ENCODE measurements at regions of chr11 and their contacts with region 1.

Region 1: DNA sequence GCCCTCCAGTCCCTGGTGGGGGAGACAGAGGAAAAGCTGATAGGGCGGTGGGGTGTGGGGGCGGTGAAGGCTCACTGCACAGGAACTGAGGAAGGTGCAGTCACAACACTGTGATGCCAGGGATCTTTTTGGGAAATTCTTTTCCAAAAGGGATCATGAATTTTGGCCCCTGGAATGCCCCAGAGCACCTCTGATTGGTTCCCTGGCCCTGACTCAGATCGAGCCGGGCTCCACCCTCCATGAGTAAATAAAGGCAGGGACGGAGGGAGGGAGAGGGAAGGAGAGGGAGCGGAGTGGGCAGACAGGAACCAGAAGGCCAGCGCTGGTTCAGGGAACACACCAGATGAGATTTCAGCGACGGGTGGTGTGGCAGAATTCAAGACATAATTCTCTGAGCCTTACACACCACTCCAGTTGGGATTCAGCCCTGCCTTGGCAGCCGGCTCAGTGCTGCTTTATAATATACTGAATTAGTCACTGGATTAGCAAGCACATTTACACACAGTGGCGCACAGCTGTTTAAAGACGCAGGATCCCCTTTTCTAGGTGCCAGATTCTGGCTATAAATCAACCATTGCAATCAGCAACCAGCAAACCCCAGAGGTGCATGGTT is 80.3 kb downstream of the ETS1 start:
- DNase-seq: peak in 4 of 9 experiments; percentile 51 to 65 (median 60)
- ATAC-seq: peak; percentile 30
- H3K4me3 ChIP-seq: peak overlapping the region; percentile 37 to 94
- H3K4me3 Mint-ChIP-seq: peak overlapping the region; percentile 84
- H3K27ac ChIP-seq: peak overlapping the region; percentile 48 to 75
- H3K27ac Mint-ChIP-seq: peak overlapping the region; percentile 98
- H3K4me1 ChIP-seq: peaks cover 100% of the 10 kb centered on the region
- H3K4me1 Mint-ChIP-seq: peaks cover 97% of the 10 kb centered on the region
- H3K27me3 ChIP-seq: no peaks in the 10 kb centered on the region
- H3K27me3 Mint-ChIP-seq: no peaks in the 10 kb centered on the region
- CTCF ChIP-seq: no peak

Region 2: GRCh38 chr11:128302425-128303186 is 204.5 kb before region 1 on chr11:
- CTCF ChIA-PET with region 1: interaction called, 8 read pairs
- POLR2A ChIA-PET with region 1: interaction called, 17 read pairs
- intact Hi-C with region 1: no loop called
- DNase-seq: peak; percentile 49 to 97 (median 72)
- ATAC-seq: peak; percentile 85
- H3K4me3 ChIP-seq: peak overlapping the region; percentile 46 to 51
- H3K4me3 Mint-ChIP-seq: peak overlapping the region; percentile 88
- H3K27ac ChIP-seq: peak overlapping the region; percentile 87 to 89
- H3K27ac Mint-ChIP-seq: peak overlapping the region; percentile 99
- H3K4me1 ChIP-seq: peaks cover 88% of the 10 kb centered on the region
- H3K4me1 Mint-ChIP-seq: peaks cover 92% of the 10 kb centered on the region
- H3K27me3 ChIP-seq: no peaks in the 10 kb centered on the region
- H3K27me3 Mint-ChIP-seq: no peaks in the 10 kb centered on the region
- CTCF ChIP-seq: no peak

Region 3: GRCh38 chr11:128488471-128488870 is 18.6 kb before region 1 on chr11:
- CTCF ChIA-PET with region 1: interaction called, 24 read pairs
- POLR2A ChIA-PET with region 1: interaction called, 28 read pairs
- intact Hi-C with region 1: no loop called
- DNase-seq: peak in 1 of 9 experiments; percentile 49
- ATAC-seq: peak; percentile 54
- H3K4me3 ChIP-seq: no peak overlapping the region
- H3K4me3 Mint-ChIP-seq: peak overlapping the region; percentile 55
- H3K27ac ChIP-seq: peak overlapping the region; percentile 12 to 61
- H3K27ac Mint-ChIP-seq: peak overlapping the region; percentile 89
- H3K4me1 ChIP-seq: peaks cover 97% of the 10 kb centered on the region
- H3K4me1 Mint-ChIP-seq: peaks cover 96% of the 10 kb centered on the region
- H3K27me3 ChIP-seq: no peaks in the 10 kb centered on the region
- H3K27me3 Mint-ChIP-seq: no peaks in the 10 kb centered on the region
- CTCF ChIP-seq: no peak

Measured in CD8-positive, alpha-beta T cell (primary cell).